Activated CD4-positive, alpha-beta memory T cell treated with anti-CD3 and anti-CD28 coated beads, Interleukin-2, amount 10 ng/mL, durations not matched to agents 7 days and 5 days (primary cell): ENCODE measurements at regions of chr12 and their contacts with region 1.

Region 1: GRCh38 chr12:46372544-46373110 is at the start of gene SLC38A2:
- DNase-seq: peak; percentile 97
- H3K4me3 Mint-ChIP-seq: peak within 1 kb of the TSS; percentile 91
- H3K27ac Mint-ChIP-seq: peak within 1 kb of the TSS; percentile 99
- H3K4me1 Mint-ChIP-seq: peaks cover 64% of the 10 kb centered on the region
- H3K27me3 Mint-ChIP-seq: no peaks in the 10 kb centered on the region
- total RNA-seq, gene SLC38A2: 265 to 267 TPM

Region 2: DNA sequence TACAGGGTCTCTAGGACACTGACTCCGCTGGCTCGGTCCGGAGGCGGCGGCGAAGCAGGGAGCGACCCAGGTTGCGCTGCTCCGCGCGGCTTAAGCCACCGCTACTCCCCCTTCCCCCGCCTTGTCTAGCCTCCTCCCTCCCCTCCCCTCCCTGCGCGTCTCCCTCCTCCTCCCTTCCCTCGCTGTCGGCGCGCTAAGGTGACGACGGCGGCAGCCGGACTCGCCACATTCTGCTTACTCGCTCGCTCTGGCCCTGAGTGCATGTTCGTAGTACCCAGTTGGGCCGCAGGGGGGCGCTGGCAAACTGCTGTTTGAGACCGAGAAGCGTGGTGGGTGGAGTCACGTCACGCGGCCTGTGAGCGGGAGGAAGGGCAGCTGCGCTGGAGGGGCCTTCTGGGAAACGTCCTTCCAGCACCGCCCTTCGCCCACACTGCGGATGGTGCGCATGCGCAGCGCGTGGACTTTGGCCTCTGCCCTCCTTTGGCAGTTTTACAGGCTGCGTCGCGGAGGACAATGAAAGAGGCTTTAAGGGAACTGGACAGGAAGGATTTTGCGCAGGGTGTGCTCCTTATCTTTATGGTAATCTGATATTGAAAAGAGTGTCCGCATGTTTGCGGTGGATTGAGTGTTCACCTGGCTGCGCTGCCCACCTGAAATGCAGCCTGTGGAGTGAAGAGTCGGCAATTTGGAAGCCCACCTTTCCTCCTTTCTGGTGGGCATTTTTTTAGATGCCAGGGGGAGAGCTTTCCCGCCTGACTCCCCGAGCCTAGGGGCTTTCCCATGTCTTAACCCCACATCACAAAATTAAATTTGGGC is 382.0 kb before region 1 on chr12 and contains the start of gene SCAF11:
- CTCF ChIA-PET with region 1: no interaction called
- POLR2A ChIA-PET with region 1: interaction called, 21 read pairs
- DNase-seq: peak; percentile 100
- H3K4me3 Mint-ChIP-seq: peak within 1 kb of the TSS; percentile 95
- H3K27ac Mint-ChIP-seq: peak within 1 kb of the TSS; percentile 97
- H3K4me1 Mint-ChIP-seq: peaks cover 46% of the 10 kb centered on the region
- H3K27me3 Mint-ChIP-seq: no peaks in the 10 kb centered on the region
- total RNA-seq, gene SCAF11: 129 to 136 TPM

Region 3: DNA sequence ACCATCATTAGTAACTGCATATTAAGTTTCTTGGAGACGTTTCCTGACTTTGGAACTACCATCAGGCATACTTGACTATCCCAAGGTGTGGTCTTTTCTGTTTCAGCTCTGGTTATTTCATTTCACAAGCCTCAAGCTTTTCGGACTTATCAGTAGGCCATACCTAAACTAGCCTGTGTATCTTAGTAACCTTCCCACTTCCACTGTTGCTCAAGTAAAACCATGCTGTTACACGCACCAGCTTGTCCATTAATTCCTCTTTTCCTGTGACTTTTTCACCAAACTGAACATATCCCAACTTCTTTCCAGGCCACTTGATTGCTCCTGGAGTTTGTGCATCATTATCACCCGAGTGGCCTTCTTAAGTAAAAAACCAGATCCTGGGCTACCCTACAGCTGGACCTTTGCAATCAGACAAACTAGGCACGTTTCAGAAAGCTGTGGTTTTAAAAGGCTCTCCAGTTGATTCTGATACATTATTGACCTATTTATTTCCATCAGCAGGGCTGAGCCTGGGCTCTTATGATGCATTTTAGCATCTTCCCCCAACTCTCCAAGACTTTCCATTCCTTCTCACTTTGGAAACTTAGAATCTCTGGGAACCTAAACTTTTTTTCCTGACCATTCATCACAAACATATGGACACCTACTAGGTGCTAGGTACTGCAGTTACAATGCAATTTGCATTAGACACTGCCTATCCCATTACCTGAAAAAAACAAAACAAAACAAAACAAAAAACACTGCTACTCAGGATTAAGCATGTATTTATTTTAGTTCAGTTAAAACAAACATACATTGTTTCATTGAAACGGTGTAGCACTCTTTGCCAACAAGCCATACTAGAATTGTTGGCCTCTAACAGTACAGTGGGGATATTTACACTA is 14.9 kb before region 1 on chr12:
- CTCF ChIA-PET with region 1: interaction called, 5 read pairs
- POLR2A ChIA-PET with region 1: interaction called, 19 read pairs
- DNase-seq: no peak
- H3K4me3 Mint-ChIP-seq: no peak overlapping the region
- H3K27ac Mint-ChIP-seq: no peak overlapping the region
- H3K4me1 Mint-ChIP-seq: peaks cover 40% of the 10 kb centered on the region
- H3K27me3 Mint-ChIP-seq: no peaks in the 10 kb centered on the region

Region 4: DNA sequence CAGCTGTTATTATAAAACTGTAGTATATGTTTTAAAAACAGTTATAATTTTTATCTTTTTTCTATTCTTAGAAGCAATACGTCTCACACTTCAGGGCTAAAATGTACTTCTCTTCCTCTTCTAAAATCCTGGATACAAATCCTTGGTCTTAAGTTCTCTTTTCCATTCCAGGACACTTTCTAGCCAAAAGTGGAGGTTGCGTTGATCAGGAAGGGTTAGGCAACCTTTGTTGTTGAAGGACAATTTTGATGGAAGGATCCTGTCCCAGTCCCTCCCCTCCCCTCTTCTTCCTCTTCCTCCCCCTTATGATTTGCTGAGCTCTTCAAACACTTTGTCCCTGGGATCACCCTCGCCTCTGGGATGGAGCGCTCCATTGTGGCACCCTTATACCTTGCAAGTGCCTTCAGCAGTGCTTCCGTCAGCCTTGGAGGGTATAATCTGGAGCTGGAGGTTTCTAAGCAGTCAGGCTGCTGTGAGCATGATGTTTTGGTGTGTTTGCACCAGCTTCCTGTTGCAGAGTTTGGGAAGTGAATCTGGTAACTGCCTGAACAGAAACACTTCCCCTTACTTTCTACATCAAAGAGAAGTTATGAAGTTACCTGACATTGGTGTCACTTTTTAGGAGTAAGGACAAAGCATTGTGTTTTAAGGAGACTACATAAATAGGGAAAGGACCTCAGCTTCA is 87.4 kb after region 1 on chr12:
- CTCF ChIA-PET with region 1: no interaction called
- POLR2A ChIA-PET with region 1: interaction called, 32 read pairs
- DNase-seq: peak; percentile 23
- H3K4me3 Mint-ChIP-seq: peak overlapping the region; percentile 60
- H3K27ac Mint-ChIP-seq: peak overlapping the region; percentile 94
- H3K4me1 Mint-ChIP-seq: peaks cover 64% of the 10 kb centered on the region
- H3K27me3 Mint-ChIP-seq: no peaks in the 10 kb centered on the region

Region 5: DNA sequence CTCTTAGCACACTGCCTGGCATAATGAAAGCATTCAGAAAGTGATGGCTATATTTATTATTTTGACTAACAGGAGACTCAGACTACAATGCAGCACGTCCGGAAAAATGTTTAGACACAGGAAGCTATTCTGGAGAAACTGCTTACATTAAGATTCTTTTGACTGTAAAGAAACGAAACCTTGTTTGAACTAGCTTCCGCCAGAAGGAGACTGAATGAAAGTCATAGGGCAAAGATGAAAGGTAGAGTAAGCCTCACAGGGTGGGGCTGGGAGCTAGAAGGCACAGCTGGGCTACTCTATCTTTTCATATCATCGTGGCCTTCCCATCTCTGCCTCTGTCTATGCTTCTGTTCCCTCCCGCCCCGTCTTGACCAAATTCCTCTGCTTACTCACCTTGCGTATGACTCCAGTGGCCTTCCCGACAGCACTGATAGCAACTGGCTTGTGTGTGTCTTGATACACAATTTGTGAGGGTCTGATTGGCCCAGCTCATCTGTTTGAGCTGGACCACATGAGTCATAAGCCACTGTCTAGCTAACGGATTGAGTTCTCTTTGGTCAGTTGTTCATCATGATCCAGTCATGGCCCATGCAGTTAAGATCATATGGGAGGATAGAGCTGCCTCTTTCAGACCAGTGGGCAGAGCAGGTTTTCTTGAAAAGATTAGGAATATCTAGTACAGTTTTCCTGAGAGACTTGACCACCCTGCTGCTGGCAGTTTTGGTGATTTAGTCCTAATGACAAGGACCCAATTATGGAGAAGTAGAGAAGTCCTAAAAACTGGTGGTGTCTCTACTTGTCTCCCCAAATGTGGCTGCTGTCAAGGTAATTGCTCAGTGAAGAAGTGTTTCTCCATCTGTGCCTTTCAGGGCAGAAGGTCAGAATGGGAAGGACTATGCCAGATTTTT is 151.5 kb after region 1 on chr12:
- CTCF ChIA-PET with region 1: interaction called, 4 read pairs
- POLR2A ChIA-PET with region 1: interaction called, 46 read pairs
- DNase-seq: peak; percentile 60
- H3K4me3 Mint-ChIP-seq: peak overlapping the region; percentile 72
- H3K27ac Mint-ChIP-seq: peak overlapping the region; percentile 93
- H3K4me1 Mint-ChIP-seq: peaks cover 55% of the 10 kb centered on the region
- H3K27me3 Mint-ChIP-seq: no peaks in the 10 kb centered on the region

Region 6: GRCh38 chr12:46675736-46676135 is 303.1 kb after region 1 on chr12:
- CTCF ChIA-PET with region 1: no interaction called
- POLR2A ChIA-PET with region 1: interaction called, 12 read pairs
- DNase-seq: no peak
- H3K4me3 Mint-ChIP-seq: no peak overlapping the region
- H3K27ac Mint-ChIP-seq: no peak overlapping the region
- H3K4me1 Mint-ChIP-seq: peaks cover 6% of the 10 kb centered on the region
- H3K27me3 Mint-ChIP-seq: peaks cover 2% of the 10 kb centered on the region